Heart right ventricle (tissue), 16 donors: ENCODE measurements at regions of chr2 and their contacts with region 1.

Region 1: DNA sequence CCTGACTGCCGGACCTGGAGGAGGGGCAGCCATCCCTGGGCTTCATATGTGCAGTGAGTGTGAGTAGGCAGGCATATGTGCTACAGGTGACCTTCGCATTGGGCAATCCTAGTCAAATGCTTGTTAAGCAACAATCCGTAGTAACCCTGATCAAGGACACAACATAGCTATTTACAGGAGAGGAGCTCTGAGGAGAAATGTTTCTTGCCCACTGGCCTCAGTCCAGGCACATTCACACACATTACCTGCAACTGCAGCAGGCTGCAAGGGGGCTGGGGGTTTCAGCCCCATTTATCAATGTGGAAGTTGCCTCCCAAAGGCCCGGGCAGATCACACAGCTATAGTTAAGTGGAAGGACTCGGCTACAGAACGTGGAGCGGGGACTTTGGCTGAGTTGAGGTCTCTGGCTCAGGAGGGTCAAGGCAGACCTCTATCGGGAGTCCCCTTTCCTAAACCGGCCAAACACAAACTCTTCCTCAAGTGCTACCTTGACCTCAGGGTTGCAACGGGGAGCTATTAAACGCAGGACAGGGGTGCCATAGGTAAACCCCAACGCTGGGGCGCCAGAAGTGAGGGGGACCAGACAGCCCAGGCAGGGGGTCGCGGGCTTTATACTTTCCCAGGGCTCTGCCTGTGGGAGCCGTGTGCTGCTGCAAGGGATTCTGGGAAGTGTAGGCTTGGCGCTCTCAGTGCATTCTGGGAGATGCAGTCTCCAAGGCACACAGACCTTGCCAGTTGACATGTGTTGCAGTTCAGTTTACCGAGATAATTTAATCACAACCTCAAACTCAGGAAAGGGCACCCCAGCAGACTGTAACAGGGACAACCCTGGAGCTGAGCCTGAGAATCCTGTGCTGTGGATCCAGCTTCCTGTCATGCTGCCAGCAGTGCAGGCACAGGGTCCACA is 9.4 kb downstream of the KHK start:
- DNase-seq: peak; percentile 52 to 64
- ATAC-seq: peak; percentile 76 to 87 (median 84)
- H3K4me3 ChIP-seq: peak overlapping the region in 9 of 10 donors; percentile 12 to 48 (median 42)
- H3K27ac ChIP-seq: peak overlapping the region in 6 of 10 donors; percentile 37 to 68 (median 57)
- H3K4me1 ChIP-seq: peaks cover 0 to 14% (median 12%) of the 10 kb centered on the region in 9 donors
- H3K27me3 ChIP-seq: no peaks in the 10 kb centered on the region
- CTCF ChIP-seq: no peak

Region 2: GRCh38 chr2:27133905-27134780 is 38.1 kb after region 1 on chr2 and contains the start of gene PREB:
- intact Hi-C with region 1: loop called in 1 of 10 experiments (anchors 5 kb)
- DNase-seq: peak; percentile 97 to 99
- ATAC-seq: peak; percentile 94 to 98 (median 98)
- H3K4me3 ChIP-seq: peak within 1 kb of the TSS; percentile 85 to 100 (median 94)
- H3K27ac ChIP-seq: peak within 1 kb of the TSS; percentile 75 to 96 (median 90)
- H3K4me1 ChIP-seq: peaks cover 5 to 19% (median 15%) of the 10 kb centered on the region in 9 donors
- H3K27me3 ChIP-seq: no peaks in the 10 kb centered on the region
- CTCF ChIP-seq: peak in 4 of 9 donors; percentile 5 to 36 (median 26)
- total RNA-seq, gene PREB: 41.6 to 57.2 (median 48.7) TPM

Region 3: GRCh38 chr2:27185331-27186026 is 89.5 kb after region 1 on chr2:
- intact Hi-C with region 1: loop called in 9 of 10 experiments (anchors 2 to 5 kb)
- DNase-seq: no peak
- ATAC-seq: peak in 7 of 8 donors; percentile 12 to 87 (median 64)
- H3K4me3 ChIP-seq: no peak overlapping the region
- H3K27ac ChIP-seq: peak overlapping the region in 8 of 10 donors; percentile 11 to 68 (median 45)
- H3K4me1 ChIP-seq: peaks cover 0 to 26% (median 9%) of the 10 kb centered on the region in 9 donors
- H3K27me3 ChIP-seq: peaks cover 0 to 5% (median 0%) of the 10 kb centered on the region in 7 donors
- CTCF ChIP-seq: no peak

Region 4: DNA sequence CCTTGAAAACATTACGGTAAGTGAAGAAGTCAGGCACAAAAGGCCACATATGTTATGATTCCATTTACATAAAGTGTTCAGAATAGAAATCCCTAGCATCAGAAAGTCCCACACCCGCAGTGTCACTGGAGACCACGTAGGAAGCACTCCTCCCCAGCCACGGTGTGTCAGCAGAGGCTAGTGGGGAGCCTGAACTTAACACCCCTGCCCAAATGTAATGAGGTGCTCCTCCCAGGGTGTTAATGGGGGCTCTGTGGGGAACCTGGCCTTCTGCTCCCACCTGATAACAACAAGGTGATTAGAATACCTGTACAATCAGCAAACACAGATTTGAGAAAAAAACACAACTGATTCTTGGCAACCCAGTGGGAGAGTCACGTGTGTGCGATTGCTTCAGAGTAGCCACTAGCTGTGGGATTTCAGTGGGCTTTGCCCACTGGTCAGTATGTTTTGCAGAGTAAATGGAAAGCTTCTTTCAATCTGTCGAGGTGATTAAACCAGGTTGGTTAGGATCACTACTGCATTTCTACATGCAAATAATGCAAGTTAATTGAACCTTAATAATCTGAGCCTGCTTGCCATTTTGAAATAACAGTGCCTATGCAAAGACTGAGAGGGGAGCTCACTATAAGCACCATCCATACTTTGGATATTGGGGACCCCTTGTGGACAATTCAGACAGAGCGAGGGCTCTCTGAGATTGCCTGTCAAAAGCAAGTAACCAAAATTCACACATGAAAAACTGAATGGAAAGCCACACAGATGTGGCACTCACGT is 95.2 kb after region 1 on chr2:
- intact Hi-C with region 1: loop called (anchors 2 to 5 kb)
- DNase-seq: peak in 1 of 2 donors; percentile 44
- ATAC-seq: peak; percentile 46 to 82 (median 70)
- H3K4me3 ChIP-seq: no peak overlapping the region
- H3K27ac ChIP-seq: no peak overlapping the region
- H3K4me1 ChIP-seq: peaks cover 0 to 2% (median 0%) of the 10 kb centered on the region in 9 donors
- H3K27me3 ChIP-seq: peaks cover 0 to 4% (median 0%) of the 10 kb centered on the region in 7 donors
- CTCF ChIP-seq: peak; percentile 30 to 71 (median 60)

Region 5: DNA sequence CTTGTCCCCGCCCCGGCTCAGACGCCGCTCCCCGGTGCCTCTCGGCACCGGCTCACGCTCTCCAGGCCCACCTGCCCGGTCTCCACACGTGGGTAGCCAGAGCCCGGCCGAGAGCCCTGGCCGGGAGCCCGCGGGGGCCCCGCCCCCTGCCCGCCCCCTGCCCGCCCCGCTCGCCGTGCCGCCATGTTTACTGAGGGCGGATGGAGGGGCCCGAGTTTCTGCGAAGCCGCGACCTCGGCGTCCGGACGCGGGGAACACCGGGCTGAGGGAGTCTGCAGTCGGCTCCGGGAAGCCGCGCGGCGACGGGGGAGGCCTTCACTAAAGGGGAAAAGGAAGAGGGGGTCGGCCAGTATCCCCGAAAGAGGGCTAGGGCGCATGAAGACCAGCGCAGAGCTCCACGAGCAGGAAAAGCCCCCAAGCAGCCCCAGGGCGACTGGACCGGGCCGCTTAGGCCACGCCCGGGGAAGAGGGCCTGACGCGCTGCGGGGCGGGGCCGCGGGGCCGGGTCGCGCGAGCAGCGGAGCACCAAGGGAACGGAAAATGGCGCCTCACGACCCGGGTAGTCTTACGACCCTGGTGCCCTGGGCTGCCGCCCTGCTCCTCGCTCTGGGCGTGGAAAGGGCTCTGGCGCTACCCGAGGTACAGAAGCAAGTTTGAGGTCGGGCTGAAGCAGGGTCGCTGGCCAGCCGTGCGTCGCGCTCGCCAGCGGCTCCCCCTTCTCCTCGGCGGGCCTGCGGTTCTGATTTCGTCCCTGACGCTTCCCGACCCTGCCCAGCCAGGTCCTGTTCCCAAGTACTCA is 116.0 kb after region 1 on chr2 and contains the starts of genes ATRAID and SLC5A6:
- intact Hi-C with region 1: loop called in 1 of 10 experiments (anchors 5 kb)
- DNase-seq: peak; percentile 86 to 89
- ATAC-seq: peak; percentile 97 to 99 (median 98)
- H3K4me3 ChIP-seq: peak within 1 kb of the TSS; percentile 50 to 93 (median 77)
- H3K27ac ChIP-seq: peak within 1 kb of the TSS; percentile 89 to 99 (median 98)
- H3K4me1 ChIP-seq: peaks cover 7 to 29% (median 22%) of the 10 kb centered on the region in 9 donors
- H3K27me3 ChIP-seq: no peaks in the 10 kb centered on the region
- CTCF ChIP-seq: no peak
- total RNA-seq, gene ATRAID: 116 to 162 (median 129) TPM
- total RNA-seq, gene SLC5A6: 5.3 to 17.0 (median 8.8) TPM

Region 6: GRCh38 chr2:27303093-27304025 is 207.4 kb after region 1 on chr2:
- intact Hi-C with region 1: loop called in 5 of 10 experiments (anchors 5 to 10 kb)
- DNase-seq: peak; percentile 21 to 65
- ATAC-seq: peak; percentile 16 to 81 (median 66)
- H3K4me3 ChIP-seq: peak overlapping the region in 8 of 10 donors; percentile 2 to 49 (median 30)
- H3K27ac ChIP-seq: peak overlapping the region in 8 of 10 donors; percentile 8 to 63 (median 54)
- H3K4me1 ChIP-seq: peaks cover 3 to 43% (median 23%) of the 10 kb centered on the region in 9 donors
- H3K27me3 ChIP-seq: peaks cover 0 to 37% (median 31%) of the 10 kb centered on the region in 7 donors
- CTCF ChIP-seq: peak; percentile 75 to 94 (median 89)